H1 (cell line): ENCODE measurements at regions of chrX and their contacts with region 1.

Region 1: DNA sequence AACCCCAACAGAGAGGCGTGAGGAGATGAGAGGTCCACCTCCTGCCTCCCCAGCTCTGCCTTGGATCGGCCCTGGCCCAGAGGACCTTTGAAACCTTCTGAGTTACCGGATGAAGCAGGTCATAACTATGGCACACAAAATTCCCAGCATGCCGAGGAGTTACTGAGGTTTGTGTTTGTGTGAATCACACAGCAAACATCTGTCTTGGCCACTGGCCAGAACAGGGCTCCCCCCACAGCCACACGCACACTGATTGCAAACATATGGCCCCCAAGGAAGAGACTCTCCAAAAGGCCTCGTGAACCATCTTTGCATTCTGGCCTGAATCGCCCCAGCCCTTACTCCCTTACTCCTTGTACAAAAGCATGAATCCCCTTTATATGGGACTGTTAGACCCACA is 18.9 kb downstream of the RPS4X start:
- DNase-seq: no peak
- H3K4me3 ChIP-seq: no peak overlapping the region
- H3K27ac ChIP-seq: no peak overlapping the region
- H3K4me1 ChIP-seq: peaks cover 0 to 3% (median 2%) of the 10 kb centered on the region in 4 experiments; a peak in 2 of 7 replicates
- H3K27me3 ChIP-seq: no peaks in the 10 kb centered on the region
- CTCF ChIP-seq: no peak
- EP300 ChIP-seq: no peak
- POLR2A ChIP-seq: no peak
- RAD21 ChIP-seq: no peak

Region 2: DNA sequence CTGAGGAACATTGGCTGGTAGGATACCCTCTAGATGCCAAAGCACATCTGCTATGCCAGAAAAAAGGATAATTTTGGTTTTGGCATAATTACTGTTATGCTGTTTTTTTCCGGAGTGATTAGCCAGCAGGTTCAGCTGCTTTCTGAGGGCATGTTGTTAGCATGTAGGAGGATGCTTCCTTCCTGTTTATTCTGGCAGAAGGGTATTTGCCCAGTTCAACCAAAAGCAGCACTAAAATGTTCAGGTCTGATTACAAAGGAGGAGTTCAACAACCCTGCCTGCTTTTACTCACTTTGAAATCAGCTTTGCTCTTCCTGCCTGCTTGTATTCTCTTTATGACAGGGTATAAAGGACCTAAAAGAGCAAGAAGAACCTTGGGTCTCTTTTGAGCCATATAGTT is 41.2 kb before region 1 on chrX:
- CTCF ChIA-PET with region 1: no interaction called
- POLR2A ChIA-PET with region 1: no interaction called
- DNase-seq: no peak
- H3K4me3 ChIP-seq: no peak overlapping the region
- H3K27ac ChIP-seq: no peak overlapping the region
- H3K4me1 ChIP-seq: no peaks in the 10 kb centered on the region
- H3K27me3 ChIP-seq: no peaks in the 10 kb centered on the region
- CTCF ChIP-seq: no peak
- EP300 ChIP-seq: no peak
- POLR2A ChIP-seq: no peak
- RAD21 ChIP-seq: no peak

Region 3: GRCh38 chrX:72238721-72239475 is 19.3 kb before region 1 on chrX and contains the start of gene ERCC6L:
- CTCF ChIA-PET with region 1: interaction called, 6 read pairs
- POLR2A ChIA-PET with region 1: interaction called, 10 read pairs
- DNase-seq: peak; percentile 72 to 84
- H3K4me3 ChIP-seq: peak within 1 kb of the TSS; percentile 69 to 84 (median 74)
- H3K27ac ChIP-seq: peak within 1 kb of the TSS; percentile 20; the same call in 1 of the 2 replicates
- H3K4me1 ChIP-seq: no peaks in the 10 kb centered on the region; a peak in 1 of 7 replicates
- H3K27me3 ChIP-seq: no peaks in the 10 kb centered on the region
- CTCF ChIP-seq: no peak
- EP300 ChIP-seq: no peak
- POLR2A ChIP-seq: peak; percentile 76 to 93
- RAD21 ChIP-seq: no peak
- total RNA-seq, gene ERCC6L: 23.9 and 24.7 TPM in 2 replicates

Region 4: DNA sequence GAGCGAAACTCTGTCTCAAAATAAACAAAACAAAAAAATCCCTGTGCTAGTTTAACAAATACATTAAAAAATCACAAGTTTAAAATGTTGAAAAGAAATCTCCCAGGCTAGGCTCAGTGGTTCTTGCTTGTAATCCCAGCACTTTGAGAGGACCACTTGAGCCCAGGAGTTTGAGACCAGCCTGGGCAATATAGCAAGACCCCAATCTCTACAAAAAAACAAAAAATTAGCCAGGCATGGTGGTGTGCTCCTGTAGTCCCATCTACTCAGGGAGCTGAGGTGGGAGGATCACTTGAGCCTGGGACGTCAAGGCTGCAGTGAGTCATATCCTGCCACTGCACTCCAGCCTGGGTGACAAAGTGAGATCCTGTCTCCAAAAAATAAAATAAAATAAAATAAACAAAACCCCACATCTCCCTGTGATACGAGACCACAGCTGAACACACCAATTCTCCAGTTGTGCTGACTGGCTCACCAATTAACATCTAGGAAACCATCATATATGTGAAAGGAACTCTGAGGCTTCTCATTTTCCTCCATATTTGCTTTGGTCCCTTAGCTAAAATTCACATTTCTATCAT is 11.6 kb after region 1 on chrX:
- CTCF ChIA-PET with region 1: no interaction called
- POLR2A ChIA-PET with region 1: interaction called, 10 read pairs
- DNase-seq: no peak
- H3K4me3 ChIP-seq: no peak overlapping the region
- H3K27ac ChIP-seq: no peak overlapping the region
- H3K4me1 ChIP-seq: no peaks in the 10 kb centered on the region
- H3K27me3 ChIP-seq: no peaks in the 10 kb centered on the region
- CTCF ChIP-seq: no peak
- EP300 ChIP-seq: no peak
- POLR2A ChIP-seq: no peak
- RAD21 ChIP-seq: no peak

Region 5: DNA sequence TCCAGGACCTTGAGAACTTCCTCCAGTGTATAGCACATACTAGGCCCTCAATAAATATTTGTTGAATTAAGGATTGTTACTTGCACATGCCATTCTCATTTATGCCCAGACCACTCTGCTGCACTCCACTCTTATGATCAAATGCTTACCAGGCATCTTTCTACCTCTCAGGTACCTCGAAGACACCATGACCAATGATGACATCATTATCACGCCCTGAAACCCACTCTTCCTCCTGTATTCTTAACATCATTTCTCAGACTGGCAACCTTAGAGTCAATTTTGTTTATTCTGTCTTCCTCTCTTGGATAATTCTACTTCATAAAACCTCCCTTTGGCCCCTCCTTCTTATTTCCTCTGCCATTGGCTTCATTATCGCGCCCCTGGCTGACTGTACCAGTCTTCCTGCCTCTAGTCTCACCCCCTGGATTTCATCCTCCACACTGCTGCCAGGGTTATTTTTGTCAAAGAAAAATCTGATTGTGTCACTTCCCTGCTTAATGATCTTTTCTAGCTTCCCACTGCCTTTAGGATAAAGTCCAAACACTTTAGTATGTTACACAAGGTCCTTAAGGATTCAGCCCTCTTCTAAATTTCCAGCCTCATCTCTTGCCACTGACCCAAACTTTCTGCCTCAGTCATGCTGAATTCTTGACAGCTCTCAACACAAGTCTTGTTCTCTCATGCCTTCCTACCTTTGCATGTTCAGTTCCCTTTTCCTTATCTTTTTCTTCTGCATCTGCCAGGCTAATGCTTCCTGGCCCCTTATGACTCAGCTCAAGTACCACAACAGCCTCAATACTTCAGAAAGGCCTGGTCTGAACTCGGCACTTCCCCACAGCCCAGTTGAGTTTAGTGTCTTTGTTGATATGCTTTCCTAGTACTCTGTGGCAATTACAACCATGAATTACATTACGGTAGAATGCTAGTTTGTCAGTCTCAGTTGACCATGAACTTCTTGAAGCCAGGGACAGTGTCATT is 268.6 kb after region 1 on chrX:
- CTCF ChIA-PET with region 1: no interaction called
- POLR2A ChIA-PET with region 1: no interaction called
- DNase-seq: no peak
- H3K4me3 ChIP-seq: no peak overlapping the region
- H3K27ac ChIP-seq: no peak overlapping the region
- H3K4me1 ChIP-seq: no peaks in the 10 kb centered on the region
- H3K27me3 ChIP-seq: no peaks in the 10 kb centered on the region
- CTCF ChIP-seq: no peak
- EP300 ChIP-seq: no peak
- POLR2A ChIP-seq: no peak
- RAD21 ChIP-seq: no peak